Activated CD8-positive, alpha-beta T cell treated with anti-CD3 and anti-CD28 coated beads for 36 hours (primary cell): ENCODE measurements at regions of chr2 and their contacts with region 1.

Region 1: GRCh38 chr2:25951071-25951547 is 31.2 kb downstream of the KIF3C start:
- DNase-seq: peak; percentile 77
- ATAC-seq: peak; percentile 95
- H3K4me3 Mint-ChIP-seq: no peak overlapping the region
- H3K27ac Mint-ChIP-seq: no peak overlapping the region
- H3K4me1 Mint-ChIP-seq: no peaks in the 10 kb centered on the region
- H3K27me3 Mint-ChIP-seq: no peaks in the 10 kb centered on the region
- CTCF ChIP-seq: peak; percentile 87

Region 2: GRCh38 chr2:25939257-25939668 is 11.8 kb before region 1 on chr2:
- CTCF ChIA-PET with region 1: interaction called, 11 read pairs
- POLR2A ChIA-PET with region 1: no interaction called
- intact Hi-C with region 1: no loop called
- DNase-seq: no peak
- ATAC-seq: no peak
- H3K4me3 Mint-ChIP-seq: no peak overlapping the region
- H3K27ac Mint-ChIP-seq: no peak overlapping the region
- H3K4me1 Mint-ChIP-seq: no peaks in the 10 kb centered on the region
- H3K27me3 Mint-ChIP-seq: no peaks in the 10 kb centered on the region
- CTCF ChIP-seq: no peak

Region 3: DNA sequence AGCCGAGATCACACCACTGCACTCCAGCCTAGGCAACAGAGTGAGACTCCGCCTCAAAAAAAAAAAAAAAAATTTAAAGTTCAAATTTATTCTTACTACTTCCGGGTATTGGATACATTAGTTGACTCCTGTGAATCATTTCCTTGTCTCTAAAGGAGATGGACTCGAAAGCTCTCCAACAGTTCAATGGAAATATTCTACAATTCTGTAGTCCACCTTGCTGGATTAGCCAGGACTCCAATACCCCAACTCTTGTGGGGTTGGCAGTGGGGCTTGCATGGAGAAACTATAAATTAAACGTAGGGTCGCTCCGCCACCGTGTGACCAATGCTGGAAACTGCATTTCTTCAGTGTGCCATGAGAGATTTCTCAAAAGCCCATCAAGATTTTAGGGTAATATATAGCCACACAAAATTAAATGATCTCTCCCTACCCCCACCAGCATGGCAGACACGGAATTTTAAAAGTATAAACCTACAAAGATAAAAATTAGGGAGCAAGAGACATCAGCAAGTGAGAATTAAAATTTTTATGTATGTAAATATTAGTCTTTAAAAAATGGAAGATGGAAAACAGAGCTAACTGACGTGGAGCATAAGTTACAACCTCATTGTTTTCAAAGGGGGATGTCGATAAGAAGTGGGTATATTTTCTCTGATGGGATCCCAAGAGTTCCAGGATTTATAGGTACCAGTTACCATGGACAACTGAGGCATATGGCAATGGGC is 194.0 kb after region 1 on chr2:
- CTCF ChIA-PET with region 1: interaction called, 20 read pairs
- POLR2A ChIA-PET with region 1: interaction called, 3 read pairs
- intact Hi-C with region 1: loop called (anchors 2 kb)
- DNase-seq: peak; percentile 82
- ATAC-seq: peak; percentile 94
- H3K4me3 Mint-ChIP-seq: no peak overlapping the region
- H3K27ac Mint-ChIP-seq: no peak overlapping the region
- H3K4me1 Mint-ChIP-seq: peaks cover 1% of the 10 kb centered on the region
- H3K27me3 Mint-ChIP-seq: peaks cover 4% of the 10 kb centered on the region
- CTCF ChIP-seq: peak; percentile 84